Breast epithelium (tissue), 4 donors: ENCODE measurements at regions of chrX and their contacts with region 1.

Region 1: DNA sequence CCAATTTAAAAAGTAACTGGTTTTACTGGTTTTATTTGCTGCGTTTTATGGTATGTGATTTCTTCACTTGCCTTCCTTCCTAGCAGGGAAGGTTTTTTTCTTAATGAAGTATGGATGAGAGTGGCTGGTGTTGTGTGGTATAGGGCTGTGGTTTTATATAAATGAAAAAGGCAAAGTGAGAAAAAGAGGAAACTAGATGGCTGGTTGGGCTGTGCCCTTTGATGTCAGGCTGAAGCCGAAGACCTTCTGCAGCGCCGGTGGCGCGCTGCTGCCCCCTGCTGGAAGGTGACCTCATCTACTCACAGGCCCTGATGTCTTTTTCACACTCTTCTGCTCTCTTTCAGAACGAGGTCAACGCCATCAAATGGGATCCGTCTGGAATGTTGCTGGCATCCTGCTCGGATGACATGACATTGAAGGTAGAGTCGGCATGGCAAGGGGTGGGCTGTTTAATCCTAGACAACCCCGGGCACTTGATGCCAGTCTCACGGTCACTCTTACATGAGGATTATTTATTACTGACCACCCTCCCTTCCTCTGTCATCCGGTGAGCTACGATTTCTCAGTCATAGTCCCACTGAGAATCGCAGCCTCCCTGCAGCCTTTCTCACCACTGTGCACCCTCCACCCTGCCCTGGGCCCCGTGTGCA is 56.6 kb downstream of the GPR143 start:
- DNase-seq: peak; percentile 52 to 56
- H3K4me3 ChIP-seq: no peak overlapping the region
- H3K27ac ChIP-seq: no peak overlapping the region
- H3K4me1 ChIP-seq: no peaks in the 10 kb centered on the region
- H3K27me3 ChIP-seq: peaks cover 0 to 4% of the 10 kb centered on the region in 2 donors
- CTCF ChIP-seq: peak in 2 of 3 donors; percentile 72 to 74
- POLR2A ChIP-seq: no peak

Region 2: DNA sequence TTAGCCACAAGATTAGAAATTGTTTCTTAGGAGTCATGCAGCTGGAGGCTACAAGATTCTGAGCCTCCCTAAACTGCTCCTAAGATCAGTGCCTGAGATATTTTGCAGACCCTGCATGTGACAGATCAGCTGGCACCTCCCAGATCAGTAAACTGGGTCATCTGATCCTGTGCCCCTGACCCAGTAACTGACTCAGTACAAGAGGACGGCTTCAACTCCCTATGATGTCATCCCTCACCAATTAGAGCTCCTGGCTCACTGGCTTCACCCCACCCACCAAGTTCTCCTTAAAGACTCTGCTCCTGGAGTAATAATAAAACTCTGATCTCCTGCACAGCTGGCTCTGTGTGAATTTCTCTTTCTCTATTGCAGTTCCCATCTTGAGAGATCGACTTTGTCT is 1736.4 kb before region 1 on chrX:
- intact Hi-C with region 1: loop called (anchors 5 kb)
- DNase-seq: no peak
- H3K4me3 ChIP-seq: no peak overlapping the region
- H3K27ac ChIP-seq: no peak overlapping the region
- H3K4me1 ChIP-seq: no peaks in the 10 kb centered on the region
- H3K27me3 ChIP-seq: no peaks in the 10 kb centered on the region
- CTCF ChIP-seq: no peak
- POLR2A ChIP-seq: no peak

Region 3: GRCh38 chrX:8424912-8425311 is 1284.1 kb before region 1 on chrX:
- intact Hi-C with region 1: loop called (anchors 5 kb)
- DNase-seq: no peak
- H3K4me3 ChIP-seq: no peak overlapping the region
- H3K27ac ChIP-seq: no peak overlapping the region
- H3K4me1 ChIP-seq: no peaks in the 10 kb centered on the region
- H3K27me3 ChIP-seq: no peaks in the 10 kb centered on the region
- CTCF ChIP-seq: no peak
- POLR2A ChIP-seq: no peak

Region 4: DNA sequence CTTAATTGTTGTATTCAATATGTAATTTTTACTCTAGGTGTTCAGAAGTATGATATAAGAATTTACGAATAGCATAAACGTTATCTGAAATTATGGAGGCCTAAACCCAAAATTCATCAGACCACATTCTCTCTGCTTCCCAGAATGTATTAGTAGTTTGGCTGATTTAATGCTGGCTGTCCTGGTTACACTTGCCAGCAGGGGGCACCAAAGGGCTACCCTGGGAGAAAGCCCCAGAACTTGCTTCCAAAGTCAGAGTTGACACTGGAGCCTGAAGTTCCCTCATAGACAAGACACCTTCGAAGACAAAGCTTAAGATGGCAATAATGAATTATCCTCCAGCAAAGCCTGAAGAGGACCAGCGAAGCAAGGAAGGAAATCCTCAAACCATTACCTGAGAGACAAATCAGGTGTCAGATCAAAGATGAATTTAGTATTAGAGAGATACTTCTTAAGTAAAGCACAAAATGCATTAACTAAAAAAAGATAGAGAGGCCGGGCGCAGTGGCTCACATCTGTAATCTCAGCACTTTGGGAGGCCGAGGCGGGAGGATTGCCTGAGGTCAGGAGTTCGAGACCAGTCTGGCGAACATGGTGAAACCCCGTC is 965.8 kb before region 1 on chrX:
- intact Hi-C with region 1: loop called (anchors 10 kb)
- DNase-seq: no peak
- H3K4me3 ChIP-seq: no peak overlapping the region
- H3K27ac ChIP-seq: no peak overlapping the region
- H3K4me1 ChIP-seq: no peaks in the 10 kb centered on the region
- H3K27me3 ChIP-seq: peaks cover 0 to 13% of the 10 kb centered on the region in 2 donors
- CTCF ChIP-seq: peak; percentile 30 to 44 (median 43)
- POLR2A ChIP-seq: no peak

Region 5: GRCh38 chrX:9690046-9690445 is 19.0 kb before region 1 on chrX:
- intact Hi-C with region 1: no loop called
- DNase-seq: no peak
- H3K4me3 ChIP-seq: no peak overlapping the region
- H3K27ac ChIP-seq: no peak overlapping the region
- H3K4me1 ChIP-seq: no peaks in the 10 kb centered on the region
- H3K27me3 ChIP-seq: peaks cover 0 to 9% of the 10 kb centered on the region in 2 donors
- CTCF ChIP-seq: no peak
- POLR2A ChIP-seq: no peak

Region 6: GRCh38 chrX:9912351-9913145 is 203.5 kb after region 1 on chrX:
- intact Hi-C with region 1: no loop called
- DNase-seq: no peak
- H3K4me3 ChIP-seq: peak overlapping the region in 2 of 3 donors; percentile 7 to 41
- H3K27ac ChIP-seq: no peak overlapping the region
- H3K4me1 ChIP-seq: no peaks in the 10 kb centered on the region
- H3K27me3 ChIP-seq: peaks cover 0 to 9% of the 10 kb centered on the region in 2 donors
- CTCF ChIP-seq: no peak
- POLR2A ChIP-seq: no peak